PC-3 (cell line): ENCODE measurements at regions of chr7 and their contacts with region 1.

Region 1: DNA sequence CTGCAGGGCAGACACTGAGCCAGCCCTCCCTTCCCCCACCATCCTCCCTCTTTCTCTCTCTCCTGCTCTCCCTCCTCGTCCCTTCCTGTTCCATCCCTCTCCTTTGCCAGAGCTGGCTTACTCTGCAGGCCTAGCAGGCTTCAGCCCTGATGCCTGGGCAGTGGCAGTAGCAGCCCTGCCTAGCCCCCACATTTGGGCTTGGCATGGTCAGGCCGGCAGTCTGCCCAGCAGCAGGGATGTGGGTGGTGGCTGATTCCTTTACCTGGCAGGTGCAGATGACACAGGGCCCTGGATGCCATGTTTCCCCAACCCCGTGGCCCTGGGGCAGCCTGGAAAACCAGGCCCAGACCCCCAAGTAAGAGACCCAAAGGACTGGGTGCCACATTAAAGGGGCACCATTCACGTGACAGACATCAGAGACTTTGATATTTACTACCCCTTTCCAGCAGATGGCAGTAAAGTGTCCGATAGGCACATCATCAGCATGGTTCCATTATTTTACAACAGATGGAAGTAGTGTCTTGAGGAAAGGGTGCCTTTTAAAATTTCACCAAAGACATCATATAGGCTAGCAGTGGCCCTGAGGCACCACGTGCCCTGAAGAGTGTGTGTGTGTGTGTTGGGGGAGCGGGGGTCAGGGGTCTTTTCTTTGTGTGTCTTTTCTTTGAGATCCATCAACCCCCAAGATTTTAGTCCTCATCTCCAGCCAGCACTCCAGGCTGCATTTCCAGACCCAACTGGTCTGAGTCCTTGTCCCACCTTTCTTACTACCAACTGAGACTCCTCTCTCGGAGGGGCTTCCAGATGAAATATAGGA is 5.9 kb downstream of the KCP start:
- DNase-seq: peak; percentile 68
- ATAC-seq: peak; percentile 59
- H3K4me3 ChIP-seq: no peak overlapping the region
- H3K27ac ChIP-seq: no peak overlapping the region
- H3K4me1 ChIP-seq: peaks cover 11% of the 10 kb centered on the region; the same call in 1 of the 2 replicates
- H3K27me3 ChIP-seq: no peaks in the 10 kb centered on the region
- CTCF ChIP-seq: peak; percentile 81

Region 2: DNA sequence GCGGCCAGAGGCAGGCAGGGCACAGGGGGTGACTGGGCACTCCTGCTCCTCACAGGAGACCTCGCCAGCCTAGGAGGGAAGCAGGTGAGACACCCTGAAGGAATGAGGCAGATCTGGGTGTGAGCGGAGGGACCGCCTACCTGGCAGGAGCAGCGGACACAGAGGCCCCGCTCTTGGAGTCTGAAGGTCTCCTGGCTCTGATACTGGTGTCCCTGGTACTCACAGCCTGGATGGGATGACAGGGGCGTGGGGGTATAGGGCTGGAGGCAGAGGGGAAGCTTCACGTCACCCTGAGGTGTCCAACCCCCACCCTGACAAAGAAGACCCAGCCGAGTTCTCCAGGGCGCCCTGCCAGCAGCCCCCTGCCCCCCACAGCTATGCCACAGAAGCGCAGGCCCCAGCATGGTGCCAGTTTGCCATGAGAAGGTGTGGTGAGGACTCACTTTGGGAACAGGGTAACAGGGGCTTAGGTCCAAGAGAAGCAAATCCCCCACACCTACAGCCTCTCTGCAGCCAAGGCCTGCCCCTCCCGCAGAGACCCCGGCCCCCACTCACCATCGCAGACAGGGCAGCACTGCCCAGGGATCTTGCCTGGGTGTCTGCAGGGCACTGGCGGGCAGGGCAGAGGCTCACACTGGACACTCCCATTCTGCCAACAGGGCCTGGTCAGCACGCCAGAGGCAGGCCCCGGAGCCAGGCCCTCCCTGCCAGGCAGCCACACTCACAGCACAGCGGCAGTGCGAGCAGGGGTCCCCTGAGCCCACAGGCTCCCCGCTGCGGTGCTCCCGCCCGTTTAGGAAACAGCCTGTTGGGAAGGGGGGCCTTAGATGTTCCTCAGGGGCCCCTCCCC is 11.1 kb before region 1 on chr7:
- CTCF ChIA-PET with region 1: no interaction called
- POLR2A ChIA-PET with region 1: interaction called, 10 read pairs
- intact Hi-C with region 1: no loop called
- DNase-seq: peak; percentile 92
- ATAC-seq: peak; percentile 75
- H3K4me3 ChIP-seq: peak overlapping the region; percentile 30; the same call in 1 of the 2 replicates
- H3K27ac ChIP-seq: peak overlapping the region; percentile 57
- H3K4me1 ChIP-seq: peaks cover 35% of the 10 kb centered on the region
- H3K27me3 ChIP-seq: no peaks in the 10 kb centered on the region
- CTCF ChIP-seq: no peak

Region 3: DNA sequence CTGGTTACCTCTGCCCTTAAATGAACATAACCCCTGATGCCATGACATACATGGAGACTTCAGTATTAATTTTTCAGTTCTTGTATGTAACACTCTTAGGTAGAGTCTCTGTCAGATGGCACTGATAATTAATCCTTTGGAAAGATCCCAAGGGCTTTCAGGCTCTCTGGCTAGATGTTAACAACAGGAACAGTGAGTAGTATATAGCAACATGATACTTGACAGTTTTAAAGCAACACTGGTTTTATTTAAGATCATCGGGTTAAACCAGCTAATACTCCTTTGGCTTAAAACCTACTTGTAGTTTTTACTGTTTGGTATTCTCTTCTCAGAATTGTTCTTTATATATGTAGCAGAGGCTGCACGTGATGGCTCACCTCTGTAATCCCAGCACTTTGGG is 347.5 kb after region 1 on chr7:
- CTCF ChIA-PET with region 1: no interaction called
- POLR2A ChIA-PET with region 1: no interaction called
- intact Hi-C with region 1: no loop called
- DNase-seq: no peak
- ATAC-seq: no peak
- H3K4me3 ChIP-seq: no peak overlapping the region
- H3K27ac ChIP-seq: no peak overlapping the region
- H3K4me1 ChIP-seq: no peaks in the 10 kb centered on the region
- H3K27me3 ChIP-seq: no peaks in the 10 kb centered on the region
- CTCF ChIP-seq: no peak